Transverse colon (tissue), 4 donors: ENCODE measurements at regions of chr18 and their contacts with region 1.

Region 1: GRCh38 chr18:64142904-64143303 is 6.0 kb downstream of the LINC00305 start:
- DNase-seq: no peak
- H3K4me3 ChIP-seq: no peak overlapping the region
- H3K27ac ChIP-seq: no peak overlapping the region
- H3K4me1 ChIP-seq: no peaks in the 10 kb centered on the region
- H3K27me3 ChIP-seq: no peaks in the 10 kb centered on the region
- CTCF ChIP-seq: no peak
- EP300 ChIP-seq: no peak
- POLR2A ChIP-seq: no peak

Region 2: GRCh38 chr18:64392202-64392601 is 249.3 kb after region 1 on chr18:
- in situ Hi-C with region 1: no loop called
- intact Hi-C with region 1: loop called (anchors 5 kb)
- DNase-seq: no peak
- H3K4me3 ChIP-seq: no peak overlapping the region
- H3K27ac ChIP-seq: no peak overlapping the region
- H3K4me1 ChIP-seq: no peaks in the 10 kb centered on the region
- H3K27me3 ChIP-seq: no peaks in the 10 kb centered on the region
- CTCF ChIP-seq: no peak
- EP300 ChIP-seq: no peak
- POLR2A ChIP-seq: no peak